ENCODE measurements at regions of chr19 and their contacts with region 1.

Region 1: GRCh38 chr19:47713046-47714021 is at the start of gene EHD2:
- DNase-seq: peak; percentile 69
- H3K4me3 ChIP-seq: peak within 1 kb of the TSS; percentile 46
- H3K27ac ChIP-seq: no peak within 1 kb of the TSS
- H3K4me1 ChIP-seq: no peaks in the 10 kb centered on the region
- H3K27me3 ChIP-seq: no peaks in the 10 kb centered on the region
- CTCF ChIP-seq: peak; percentile 89
- total RNA-seq, gene EHD2: 2.9 and 3.0 TPM in 2 replicates

Region 2: DNA sequence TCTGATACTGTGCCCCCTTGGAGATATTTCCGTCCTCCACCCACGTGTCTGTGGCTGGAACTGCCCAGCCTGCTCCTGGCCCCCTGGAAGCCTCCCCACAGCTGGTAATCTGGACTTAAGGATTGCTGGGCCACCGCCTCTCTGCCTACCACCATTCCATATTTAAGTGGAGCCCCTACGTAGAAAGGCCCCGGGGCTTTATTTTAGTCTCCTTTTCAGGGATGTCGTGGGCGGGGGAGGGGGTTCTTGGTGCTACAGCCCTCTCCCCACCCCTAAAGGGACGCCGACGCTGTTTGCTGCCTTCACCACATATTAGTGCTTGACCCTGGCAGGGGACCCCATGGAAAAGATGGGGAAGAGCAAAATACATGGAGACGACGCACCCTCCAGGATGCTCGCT is 29.3 kb after region 1 on chr19:
- CTCF ChIA-PET with region 1: interaction called, 17 read pairs
- POLR2A ChIA-PET with region 1: no interaction called
- intact Hi-C with region 1: loop called (anchors 1 kb)
- DNase-seq: no peak
- H3K4me3 ChIP-seq: peak overlapping the region; percentile 49
- H3K27ac ChIP-seq: peak overlapping the region; percentile 75
- H3K4me1 ChIP-seq: peaks cover 14% of the 10 kb centered on the region
- H3K27me3 ChIP-seq: no peaks in the 10 kb centered on the region
- CTCF ChIP-seq: no peak

Region 3: DNA sequence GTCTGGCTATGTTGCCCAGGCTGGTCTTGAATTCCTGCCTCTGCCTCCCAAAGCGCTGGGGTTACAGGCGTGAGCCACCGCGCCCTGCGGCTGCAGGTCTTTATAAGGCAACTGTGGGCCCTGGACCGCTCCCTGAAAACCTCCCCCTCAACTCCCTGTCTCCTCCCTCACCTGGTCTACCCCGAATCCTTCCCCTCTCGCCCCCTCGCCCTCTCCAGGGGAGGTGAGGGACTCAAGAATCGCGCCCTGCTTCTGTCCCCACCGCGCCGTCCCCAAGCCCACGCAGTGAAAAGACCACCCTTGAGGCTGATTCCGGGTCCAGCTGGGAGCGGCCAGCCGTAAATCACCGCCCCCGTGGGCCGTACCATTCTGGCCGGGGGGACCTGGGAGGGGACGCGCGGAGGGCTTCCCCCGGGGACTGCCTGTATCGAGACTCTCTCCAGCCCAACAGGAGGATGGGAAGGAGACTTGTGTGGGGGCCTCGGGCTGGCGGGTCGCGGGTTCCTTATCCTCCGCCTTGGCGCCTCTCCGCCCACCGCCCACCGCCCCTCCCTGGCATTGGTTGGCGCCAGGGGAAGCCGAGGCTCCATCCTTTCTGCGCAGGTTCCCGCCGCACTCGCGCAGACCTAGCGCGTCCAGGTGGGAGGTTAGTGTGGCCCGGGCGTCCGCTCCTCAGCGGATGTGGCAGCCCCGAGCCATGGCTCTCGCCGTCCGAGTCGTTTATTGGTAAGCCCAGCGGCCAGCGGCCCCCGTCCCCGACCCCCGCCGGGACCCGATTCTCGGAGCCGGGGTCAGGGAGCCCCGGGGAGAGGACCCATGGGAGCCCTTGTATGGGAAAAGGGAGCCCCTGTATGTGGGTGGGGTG is 65.0 kb after region 1 on chr19 and contains the start of gene SELENOW:
- CTCF ChIA-PET with region 1: no interaction called
- POLR2A ChIA-PET with region 1: no interaction called
- intact Hi-C with region 1: no loop called
- DNase-seq: peak; percentile 82
- H3K4me3 ChIP-seq: peak within 1 kb of the TSS; percentile 98
- H3K27ac ChIP-seq: peak within 1 kb of the TSS; percentile 99
- H3K4me1 ChIP-seq: peaks cover 9% of the 10 kb centered on the region
- H3K27me3 ChIP-seq: no peaks in the 10 kb centered on the region
- CTCF ChIP-seq: no peak
- total RNA-seq, gene SELENOW: 107 and 121 TPM in 2 replicates

Region 4: GRCh38 chr19:48169585-48170037 is 456.3 kb after region 1 on chr19:
- CTCF ChIA-PET with region 1: no interaction called
- POLR2A ChIA-PET with region 1: no interaction called
- intact Hi-C with region 1: no loop called
- DNase-seq: peak; percentile 75
- H3K4me3 ChIP-seq: peak overlapping the region; percentile 100
- H3K27ac ChIP-seq: peak overlapping the region; percentile 99
- H3K4me1 ChIP-seq: peaks cover 20% of the 10 kb centered on the region
- H3K27me3 ChIP-seq: no peaks in the 10 kb centered on the region
- CTCF ChIP-seq: no peak

Measured in A673 (cell line).